Activated CD4-positive, alpha-beta T cell treated with anti-CD3 and anti-CD28 coated beads for 36 hours (primary cell): ENCODE measurements at regions of chr17 and their contacts with region 1.

Region 1: DNA sequence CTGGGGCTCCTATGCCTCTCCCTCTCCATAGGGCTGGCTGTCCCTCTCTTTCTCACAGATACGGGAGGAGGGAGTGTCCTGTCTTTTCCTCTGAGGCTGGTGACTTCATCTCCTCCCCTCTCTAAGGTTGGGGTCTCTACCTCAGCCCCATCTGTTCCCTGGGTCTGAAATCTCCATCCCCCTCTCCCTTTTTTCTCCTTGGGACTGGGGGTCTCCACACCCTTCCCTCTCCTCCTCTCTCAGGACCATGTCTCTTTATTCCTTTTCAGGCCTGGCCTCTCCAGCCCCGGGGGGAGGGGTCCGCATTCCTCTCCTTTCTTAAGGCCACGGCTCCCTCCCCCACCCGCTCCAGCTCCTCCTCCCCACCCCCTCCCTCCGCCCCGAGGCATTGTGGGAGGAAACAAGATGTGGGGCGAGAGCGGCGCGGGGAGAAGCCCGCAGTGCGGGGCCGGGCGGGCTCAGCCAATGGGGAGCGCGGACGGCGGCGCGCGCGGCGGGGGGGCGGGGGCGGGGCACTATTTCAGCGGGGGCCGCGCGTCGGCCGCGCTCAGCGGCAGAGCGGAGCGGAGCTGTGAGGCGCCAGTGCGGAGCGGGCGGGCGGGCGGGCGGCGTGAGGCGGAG is at the start of gene DYNLL2:
- DNase-seq: peak; percentile 95
- ATAC-seq: peak; percentile 89
- H3K4me3 Mint-ChIP-seq: peak within 1 kb of the TSS; percentile 83
- H3K27ac Mint-ChIP-seq: peak within 1 kb of the TSS; percentile 79
- H3K4me1 Mint-ChIP-seq: peaks cover 35% of the 10 kb centered on the region
- H3K27me3 Mint-ChIP-seq: no peaks in the 10 kb centered on the region
- total RNA-seq, gene DYNLL2: 21.3 to 28.3 TPM

Region 2: DNA sequence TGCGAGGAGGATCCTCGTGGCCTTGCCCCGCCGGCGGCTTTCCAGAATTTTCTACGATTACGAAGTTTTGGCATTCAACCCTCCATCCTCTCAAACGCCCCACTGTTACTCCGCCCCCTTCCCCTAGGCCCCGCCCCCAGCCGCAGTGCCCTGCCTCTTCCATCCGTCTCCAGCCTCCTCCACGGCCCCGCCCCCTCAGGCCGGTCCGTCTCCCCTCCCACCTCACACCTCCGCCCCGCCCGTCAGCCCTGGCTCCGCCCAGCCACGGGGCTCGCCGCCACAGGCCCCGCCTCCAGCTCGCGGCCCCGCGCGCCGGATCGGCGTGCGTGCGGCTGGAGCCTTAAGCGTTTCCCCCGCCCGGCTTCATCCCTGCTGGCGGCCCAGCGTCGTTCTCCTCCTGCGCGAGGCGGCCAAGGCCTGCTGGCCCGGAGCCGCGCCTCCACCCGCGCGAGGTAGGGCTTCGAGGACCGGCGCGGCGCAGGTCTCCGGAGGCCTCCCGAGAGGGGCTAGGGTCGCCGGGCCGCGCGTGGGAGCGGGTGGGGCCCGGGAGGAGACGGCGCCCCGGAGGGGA is 1249.1 kb before region 1 on chr17 and contains the starts of genes C17orf67 and DGKE:
- CTCF ChIA-PET with region 1: no interaction called
- POLR2A ChIA-PET with region 1: no interaction called
- intact Hi-C with region 1: loop called in 1 of 2 experiments (anchors 10 kb)
- DNase-seq: peak; percentile 100
- ATAC-seq: peak; percentile 93
- H3K4me3 Mint-ChIP-seq: peak within 1 kb of the TSS; percentile 86
- H3K27ac Mint-ChIP-seq: peak within 1 kb of the TSS; percentile 90
- H3K4me1 Mint-ChIP-seq: peaks cover 62% of the 10 kb centered on the region
- H3K27me3 Mint-ChIP-seq: no peaks in the 10 kb centered on the region
- total RNA-seq, gene C17orf67: 4.0 to 5.0 TPM
- total RNA-seq, gene DGKE: 22.4 to 27.4 TPM

Region 3: GRCh38 chr17:57284984-57285646 is 797.9 kb before region 1 on chr17:
- CTCF ChIA-PET with region 1: no interaction called
- POLR2A ChIA-PET with region 1: interaction called, 11 read pairs
- intact Hi-C with region 1: no loop called
- DNase-seq: peak; percentile 77
- ATAC-seq: peak; percentile 65
- H3K4me3 Mint-ChIP-seq: peak overlapping the region; percentile 54
- H3K27ac Mint-ChIP-seq: peak overlapping the region; percentile 72
- H3K4me1 Mint-ChIP-seq: peaks cover 59% of the 10 kb centered on the region
- H3K27me3 Mint-ChIP-seq: no peaks in the 10 kb centered on the region

Region 4: DNA sequence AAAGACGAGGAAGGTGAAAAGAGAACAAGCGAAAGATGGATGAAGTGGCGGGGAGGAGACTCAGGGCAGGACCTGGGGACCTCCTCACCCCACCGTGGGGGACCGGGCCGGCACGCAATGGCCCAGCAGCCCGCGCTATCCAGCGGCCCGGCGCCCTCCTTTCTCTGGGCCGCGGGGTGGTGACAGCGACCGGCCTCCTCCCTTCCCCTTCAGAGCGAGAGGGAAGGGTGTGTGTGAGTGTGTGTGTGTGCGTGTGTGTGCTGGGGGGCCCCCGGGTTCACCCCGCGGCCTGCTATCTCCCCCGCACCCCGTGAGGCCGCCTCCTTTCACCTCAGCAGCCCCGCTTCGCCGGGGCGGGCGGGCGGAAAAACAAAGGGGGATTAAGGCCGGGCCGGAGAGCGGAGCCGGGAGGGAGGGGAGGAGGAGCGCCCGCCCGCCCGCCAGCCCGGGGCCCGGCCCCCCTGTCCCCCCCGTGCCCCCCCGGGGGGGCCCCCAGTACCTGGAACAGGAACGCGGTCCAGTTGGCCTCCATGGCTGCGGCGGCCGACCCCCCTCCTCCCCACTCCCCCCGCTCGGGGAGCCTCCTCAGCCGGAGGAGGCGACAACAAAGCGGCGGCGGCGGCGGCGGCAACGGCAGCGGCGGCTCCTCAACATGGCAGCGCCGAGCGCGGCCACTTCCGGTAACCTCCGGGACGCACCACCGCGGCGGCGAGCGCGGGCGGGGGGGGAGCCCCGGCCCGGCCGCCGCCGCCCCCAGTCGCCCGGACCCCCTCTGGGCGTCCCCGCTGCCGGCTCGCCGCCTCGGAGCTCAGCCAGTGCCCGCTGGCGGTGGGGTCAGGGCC is 95.2 kb before region 1 on chr17 and contains the start of gene VEZF1:
- CTCF ChIA-PET with region 1: no interaction called
- POLR2A ChIA-PET with region 1: no interaction called
- intact Hi-C with region 1: loop called in 1 of 2 experiments (anchors 1 kb)
- DNase-seq: peak; percentile 88
- ATAC-seq: peak; percentile 68
- H3K4me3 Mint-ChIP-seq: peak within 1 kb of the TSS; percentile 89
- H3K27ac Mint-ChIP-seq: peak within 1 kb of the TSS; percentile 95
- H3K4me1 Mint-ChIP-seq: peaks cover 56% of the 10 kb centered on the region
- H3K27me3 Mint-ChIP-seq: no peaks in the 10 kb centered on the region
- total RNA-seq, gene VEZF1: 21.3 to 26.3 TPM

Region 5: DNA sequence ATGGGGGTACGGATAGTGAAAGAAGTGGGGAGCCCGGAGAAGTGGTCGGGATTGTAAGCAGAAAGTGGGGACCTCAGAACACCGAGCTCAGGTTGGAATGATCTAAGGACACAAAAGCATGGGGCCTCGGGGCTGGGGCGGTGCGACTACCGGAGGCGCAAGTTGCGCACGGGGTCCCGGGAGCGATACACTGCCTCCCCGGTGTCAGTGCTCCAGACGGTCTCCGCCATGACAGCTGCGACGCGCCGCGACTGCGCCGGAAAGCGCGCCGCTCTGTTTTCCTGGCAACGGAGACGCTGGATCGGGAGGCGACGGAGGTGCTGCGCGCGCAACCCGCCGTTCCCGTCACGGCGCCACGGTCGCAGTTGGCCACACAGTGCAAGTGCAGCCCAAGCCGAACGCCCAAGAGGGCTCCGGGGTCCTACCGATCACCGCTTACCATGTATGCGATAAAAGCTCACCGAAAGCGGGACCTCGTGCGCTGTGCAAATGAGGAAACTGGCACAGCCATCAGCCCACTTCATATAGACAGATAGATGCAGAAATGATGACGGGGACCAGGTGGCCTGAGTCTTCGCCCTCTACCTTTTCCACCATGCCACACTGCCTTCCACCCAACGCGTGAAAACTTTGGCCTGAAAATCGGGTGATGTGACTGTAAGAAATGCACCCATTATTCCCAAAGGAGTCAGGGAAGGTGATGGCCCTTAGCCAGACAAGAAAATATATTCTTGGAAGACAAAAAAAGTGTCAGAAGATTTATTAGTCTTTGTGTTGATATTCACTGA is 136.2 kb after region 1 on chr17 and contains the start of gene MKS1:
- CTCF ChIA-PET with region 1: interaction called, 3 read pairs
- POLR2A ChIA-PET with region 1: no interaction called
- intact Hi-C with region 1: loop called in 1 of 2 experiments (anchors 1 kb)
- DNase-seq: peak; percentile 98
- ATAC-seq: peak; percentile 100
- H3K4me3 Mint-ChIP-seq: peak within 1 kb of the TSS; percentile 90
- H3K27ac Mint-ChIP-seq: peak within 1 kb of the TSS; percentile 86
- H3K4me1 Mint-ChIP-seq: peaks cover 22% of the 10 kb centered on the region
- H3K27me3 Mint-ChIP-seq: peaks cover 2% of the 10 kb centered on the region
- total RNA-seq, gene MKS1: 20.4 to 22.5 TPM

Region 6: GRCh38 chr17:58267347-58268324 is 184.7 kb after region 1 on chr17:
- CTCF ChIA-PET with region 1: no interaction called
- POLR2A ChIA-PET with region 1: no interaction called
- intact Hi-C with region 1: no loop called
- DNase-seq: no peak
- ATAC-seq: no peak
- H3K4me3 Mint-ChIP-seq: no peak overlapping the region
- H3K27ac Mint-ChIP-seq: no peak overlapping the region
- H3K4me1 Mint-ChIP-seq: no peaks in the 10 kb centered on the region
- H3K27me3 Mint-ChIP-seq: peaks cover 20% of the 10 kb centered on the region

Region 7: GRCh38 chr17:59106463-59107305 is 1023.7 kb after region 1 on chr17 and contains the start of gene TRIM37:
- CTCF ChIA-PET with region 1: no interaction called
- POLR2A ChIA-PET with region 1: no interaction called
- intact Hi-C with region 1: loop called in 1 of 2 experiments (anchors 5 kb)
- DNase-seq: peak; percentile 99
- ATAC-seq: peak; percentile 95
- H3K4me3 Mint-ChIP-seq: peak within 1 kb of the TSS; percentile 85
- H3K27ac Mint-ChIP-seq: peak within 1 kb of the TSS; percentile 92
- H3K4me1 Mint-ChIP-seq: peaks cover 49% of the 10 kb centered on the region
- H3K27me3 Mint-ChIP-seq: no peaks in the 10 kb centered on the region
- total RNA-seq, gene TRIM37: 21.3 to 22.7 TPM